MCF 10A (cell line): ENCODE measurements at regions of chr1 and their contacts with region 1.

Region 1: GRCh38 chr1:187010571-187011310 is 182.0 kb downstream of the PLA2G4A start:
- DNase-seq: peak; percentile 11
- H3K4me3 Mint-ChIP-seq: no peak overlapping the region
- H3K27ac Mint-ChIP-seq: no peak overlapping the region
- H3K4me1 Mint-ChIP-seq: no peaks in the 10 kb centered on the region
- H3K27me3 Mint-ChIP-seq: no peaks in the 10 kb centered on the region
- CTCF ChIP-seq: no peak

Region 2: GRCh38 chr1:187032982-187033692 is 22.4 kb after region 1 on chr1:
- CTCF ChIA-PET with region 1: interaction called, 10 read pairs
- POLR2A ChIA-PET with region 1: interaction called, 4 read pairs
- intact Hi-C with region 1: no loop called
- DNase-seq: peak; percentile 50
- H3K4me3 Mint-ChIP-seq: no peak overlapping the region
- H3K27ac Mint-ChIP-seq: no peak overlapping the region
- H3K4me1 Mint-ChIP-seq: no peaks in the 10 kb centered on the region
- H3K27me3 Mint-ChIP-seq: no peaks in the 10 kb centered on the region
- CTCF ChIP-seq: no peak

Region 3: GRCh38 chr1:187038789-187039188 is 28.0 kb after region 1 on chr1:
- CTCF ChIA-PET with region 1: interaction called, 12 read pairs
- POLR2A ChIA-PET with region 1: interaction called, 4 read pairs
- intact Hi-C with region 1: no loop called
- DNase-seq: peak; percentile 90
- H3K4me3 Mint-ChIP-seq: no peak overlapping the region
- H3K27ac Mint-ChIP-seq: no peak overlapping the region
- H3K4me1 Mint-ChIP-seq: peaks cover 7% of the 10 kb centered on the region
- H3K27me3 Mint-ChIP-seq: no peaks in the 10 kb centered on the region
- CTCF ChIP-seq: no peak